PC-9 (cell line): ENCODE measurements at regions of chr7 and their contacts with region 1.

Region 1: DNA sequence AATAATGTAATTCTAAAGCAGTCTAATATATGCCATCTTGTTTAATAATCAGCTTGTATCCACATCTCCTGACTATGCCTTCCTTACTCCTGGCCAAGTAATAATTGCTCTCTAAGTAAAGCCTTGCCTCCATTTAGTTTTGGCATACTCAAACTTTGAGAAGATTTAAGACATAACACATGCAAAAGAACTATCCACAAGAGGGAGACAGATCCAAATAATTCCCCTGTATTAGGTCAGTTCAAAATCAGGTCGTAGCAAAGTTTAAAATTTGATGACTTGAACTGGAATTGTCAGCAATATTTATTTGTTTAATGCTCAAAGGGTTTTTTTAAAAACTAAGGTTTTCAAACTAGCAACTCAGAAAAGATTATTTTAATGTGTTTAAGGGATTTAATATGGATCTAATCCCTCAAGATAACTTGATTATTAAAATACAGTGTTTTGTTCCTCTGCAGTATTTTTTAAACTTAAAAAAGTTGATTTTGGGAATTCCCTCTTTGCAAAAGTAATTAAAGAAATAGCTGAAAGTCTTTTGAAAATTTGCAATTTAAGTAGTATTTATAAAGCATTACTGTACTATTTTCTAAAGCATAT is 95.3 kb downstream of the HDAC9 start:
- DNase-seq: peak in 1 of 2 experiments; percentile 53
- H3K4me3 ChIP-seq: no peak overlapping the region
- H3K27ac ChIP-seq: no peak overlapping the region
- H3K4me1 ChIP-seq: peaks cover 7% of the 10 kb centered on the region
- H3K27me3 ChIP-seq: no peaks in the 10 kb centered on the region
- CTCF ChIP-seq: peak; percentile 86

Region 2: GRCh38 chr7:18610331-18610948 is 19.6 kb after region 1 on chr7:
- CTCF ChIA-PET with region 1: no interaction called
- POLR2A ChIA-PET with region 1: no interaction called
- intact Hi-C with region 1: no loop called
- DNase-seq: peak in 1 of 2 experiments; percentile 7
- H3K4me3 ChIP-seq: no peak overlapping the region
- H3K27ac ChIP-seq: no peak overlapping the region
- H3K4me1 ChIP-seq: 0 out of 2 replicates have a peak, but pooled peaks cover 4% of the 10 kb centered on the region
- H3K27me3 ChIP-seq: no peaks in the 10 kb centered on the region
- CTCF ChIP-seq: peak; percentile 70

Region 3: GRCh38 chr7:19442016-19442785 is 851.4 kb after region 1 on chr7:
- CTCF ChIA-PET with region 1: no interaction called
- POLR2A ChIA-PET with region 1: no interaction called
- intact Hi-C with region 1: loop called (anchors 5 kb)
- DNase-seq: peak in 1 of 2 experiments; percentile 18
- H3K4me3 ChIP-seq: no peak overlapping the region
- H3K27ac ChIP-seq: no peak overlapping the region
- H3K4me1 ChIP-seq: no peaks in the 10 kb centered on the region
- H3K27me3 ChIP-seq: no peaks in the 10 kb centered on the region
- CTCF ChIP-seq: peak; percentile 61

Region 4: DNA sequence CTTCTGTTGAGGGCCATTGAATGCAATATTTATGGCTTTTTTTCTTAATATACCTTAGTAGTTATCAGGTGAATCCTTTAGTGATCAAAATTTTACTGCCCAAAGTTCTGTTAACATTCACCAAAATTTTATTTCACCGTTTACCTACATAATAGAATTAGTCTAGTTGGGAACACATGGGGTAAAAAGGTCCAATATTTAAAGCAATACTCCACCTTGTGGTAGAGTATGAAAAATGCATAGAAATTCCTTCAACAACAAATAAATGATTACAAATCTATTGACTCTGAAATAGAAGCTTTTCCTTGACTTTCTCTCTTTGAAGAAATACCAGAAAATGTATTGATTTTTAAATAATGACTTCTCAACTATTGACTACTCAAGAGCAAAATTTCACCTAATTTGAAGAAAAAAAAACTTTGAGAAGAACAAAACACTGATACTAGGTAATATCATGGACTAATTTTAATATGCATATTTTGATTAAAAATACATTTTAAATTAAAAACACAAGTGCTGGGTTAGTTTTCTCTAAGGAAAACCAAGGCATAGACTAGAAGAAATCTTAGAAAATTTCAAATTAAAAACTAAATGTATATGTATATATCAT is 1074.7 kb after region 1 on chr7:
- CTCF ChIA-PET with region 1: no interaction called
- POLR2A ChIA-PET with region 1: no interaction called
- intact Hi-C with region 1: loop called (anchors 1 kb)
- DNase-seq: no peak
- H3K4me3 ChIP-seq: no peak overlapping the region
- H3K27ac ChIP-seq: no peak overlapping the region
- H3K4me1 ChIP-seq: peaks cover 10% of the 10 kb centered on the region; the same call in 1 of the 2 replicates
- H3K27me3 ChIP-seq: no peaks in the 10 kb centered on the region
- CTCF ChIP-seq: peak; percentile 90